Gastrocnemius medialis (tissue), 4 donors: ENCODE measurements at regions of chr13 and their contacts with region 1.

Region 1: GRCh38 chr13:48580185-48580803 is 47.4 kb upstream of the RCBTB2 start:
- DNase-seq: peak; percentile 32 to 58
- ATAC-seq: peak; percentile 43 to 48
- H3K4me3 ChIP-seq: no peak overlapping the region
- H3K27ac ChIP-seq: no peak overlapping the region
- H3K4me1 ChIP-seq: peaks cover 5 to 23% of the 10 kb centered on the region in 2 donors
- H3K27me3 ChIP-seq: no peaks in the 10 kb centered on the region
- CTCF ChIP-seq: peak; percentile 58 to 85 (median 76)
- POLR2A ChIP-seq: no peak

Region 2: GRCh38 chr13:48126944-48127830 is 453.1 kb before region 1 on chr13:
- in situ Hi-C with region 1: loop called in 3 of 4 experiments (anchors 10 to 25 kb)
- intact Hi-C with region 1: loop called (anchors 5 kb)
- DNase-seq: peak; percentile 43 to 72
- ATAC-seq: peak; percentile 73 to 79
- H3K4me3 ChIP-seq: no peak overlapping the region
- H3K27ac ChIP-seq: peak overlapping the region; percentile 27 to 80 (median 73)
- H3K4me1 ChIP-seq: peaks cover 12 to 33% of the 10 kb centered on the region in 2 donors
- H3K27me3 ChIP-seq: no peaks in the 10 kb centered on the region
- CTCF ChIP-seq: peak; percentile 53 to 74 (median 72)
- POLR2A ChIP-seq: no peak

Region 3: DNA sequence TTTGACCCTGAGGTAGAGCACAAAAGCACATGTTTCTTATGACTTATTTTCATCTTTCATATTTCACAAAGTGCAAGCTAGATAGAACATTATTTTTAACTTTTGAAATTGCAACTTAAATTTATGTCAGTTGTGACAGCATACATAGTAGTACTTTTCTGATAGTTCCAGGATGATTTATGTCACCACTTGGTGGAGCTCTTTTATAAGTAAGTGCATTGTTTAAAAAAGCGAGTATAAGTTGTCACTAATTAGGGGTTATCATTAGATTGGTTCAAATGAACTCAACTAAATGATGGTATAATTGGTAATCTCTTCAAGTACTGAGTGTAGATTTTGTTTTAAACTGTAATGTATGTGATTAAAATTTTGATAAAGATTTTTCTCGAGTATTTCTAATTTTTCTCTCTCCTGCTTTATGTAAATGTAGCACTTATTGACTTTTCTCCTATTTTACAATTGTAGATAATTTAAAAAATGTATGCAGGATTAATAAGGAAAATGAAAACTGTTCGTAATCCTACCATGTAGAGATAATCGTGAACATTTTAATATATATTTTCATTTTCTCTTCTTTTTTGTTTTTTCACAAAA is 245.7 kb before region 1 on chr13:
- in situ Hi-C with region 1: loop called in 3 of 4 experiments (anchors 5 to 25 kb)
- intact Hi-C with region 1: loop called (anchors 1 kb)
- DNase-seq: no peak
- ATAC-seq: peak in 1 of 2 donors; percentile 51
- H3K4me3 ChIP-seq: no peak overlapping the region
- H3K27ac ChIP-seq: no peak overlapping the region
- H3K4me1 ChIP-seq: peaks cover 4% of the 10 kb centered on the region in 2 donors
- H3K27me3 ChIP-seq: no peaks in the 10 kb centered on the region
- CTCF ChIP-seq: peak in 4 of 5 experiments; percentile 21 to 64 (median 61)
- POLR2A ChIP-seq: no peak

Region 4: DNA sequence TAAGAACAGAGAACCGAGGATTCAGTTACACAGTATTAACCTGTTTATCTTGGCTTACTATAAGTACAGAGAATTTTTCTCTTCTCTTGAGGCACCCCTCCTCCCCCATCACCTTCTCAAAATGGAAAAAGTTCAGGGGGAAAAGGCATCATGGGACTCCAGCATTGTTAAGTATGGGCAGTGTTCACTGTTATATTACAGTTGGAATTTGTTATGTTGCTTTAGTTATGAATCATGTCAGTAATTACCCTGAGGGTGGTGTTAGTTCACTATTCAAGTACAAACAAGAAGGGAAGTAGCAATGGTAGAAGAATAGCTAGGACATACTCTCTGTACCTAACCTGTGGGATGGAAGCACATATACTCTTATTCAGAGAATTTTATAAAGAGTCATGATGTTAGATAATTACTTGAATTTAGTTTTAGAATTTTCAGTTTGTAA is 179.4 kb before region 1 on chr13:
- in situ Hi-C with region 1: loop called in 1 of 4 experiments (anchors 25 kb)
- intact Hi-C with region 1: loop called (anchors 5 kb)
- DNase-seq: no peak
- ATAC-seq: peak; percentile 71 to 79
- H3K4me3 ChIP-seq: no peak overlapping the region
- H3K27ac ChIP-seq: peak overlapping the region; percentile 44 to 71 (median 70)
- H3K4me1 ChIP-seq: peaks cover 0 to 14% of the 10 kb centered on the region in 2 donors
- H3K27me3 ChIP-seq: no peaks in the 10 kb centered on the region
- CTCF ChIP-seq: no peak
- POLR2A ChIP-seq: no peak

Region 5: DNA sequence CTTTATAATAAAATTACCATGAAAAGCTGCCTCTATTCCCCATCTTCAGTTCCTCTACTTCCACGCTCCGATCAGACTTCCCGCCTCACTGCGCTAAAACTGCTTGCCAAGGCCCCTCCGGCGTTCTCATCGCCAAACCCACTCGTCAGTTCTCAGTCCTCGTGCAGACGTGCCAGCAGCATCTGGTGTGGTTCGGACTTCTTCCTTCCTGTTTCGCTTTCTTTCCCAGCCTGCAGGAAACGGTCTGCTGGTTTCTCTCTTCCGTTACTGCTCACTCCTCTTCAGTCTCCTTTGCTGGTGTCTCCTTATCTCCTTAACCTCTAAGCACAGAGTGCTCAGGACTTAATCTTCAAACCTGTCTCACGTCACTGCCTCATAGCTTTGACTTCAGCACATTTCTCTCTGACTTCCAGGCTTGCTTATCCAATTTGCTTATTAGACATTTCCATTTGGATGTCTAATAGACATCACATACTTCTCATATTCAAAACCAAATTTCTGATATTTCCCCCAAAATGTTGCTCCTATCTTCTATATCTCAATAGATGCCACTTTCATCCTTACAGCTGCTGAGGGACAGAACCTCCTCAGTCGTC is 87.7 kb before region 1 on chr13:
- in situ Hi-C with region 1: loop called in 1 of 4 experiments (anchors 10 kb)
- intact Hi-C with region 1: loop called (anchors 5 kb)
- DNase-seq: peak; percentile 52 to 67
- ATAC-seq: peak; percentile 71 to 74
- H3K4me3 ChIP-seq: peak overlapping the region; percentile 26 to 47 (median 37)
- H3K27ac ChIP-seq: peak overlapping the region; percentile 57 to 73 (median 67)
- H3K4me1 ChIP-seq: peaks cover 9 to 17% of the 10 kb centered on the region in 2 donors
- H3K27me3 ChIP-seq: no peaks in the 10 kb centered on the region
- CTCF ChIP-seq: no peak
- POLR2A ChIP-seq: no peak

Region 6: DNA sequence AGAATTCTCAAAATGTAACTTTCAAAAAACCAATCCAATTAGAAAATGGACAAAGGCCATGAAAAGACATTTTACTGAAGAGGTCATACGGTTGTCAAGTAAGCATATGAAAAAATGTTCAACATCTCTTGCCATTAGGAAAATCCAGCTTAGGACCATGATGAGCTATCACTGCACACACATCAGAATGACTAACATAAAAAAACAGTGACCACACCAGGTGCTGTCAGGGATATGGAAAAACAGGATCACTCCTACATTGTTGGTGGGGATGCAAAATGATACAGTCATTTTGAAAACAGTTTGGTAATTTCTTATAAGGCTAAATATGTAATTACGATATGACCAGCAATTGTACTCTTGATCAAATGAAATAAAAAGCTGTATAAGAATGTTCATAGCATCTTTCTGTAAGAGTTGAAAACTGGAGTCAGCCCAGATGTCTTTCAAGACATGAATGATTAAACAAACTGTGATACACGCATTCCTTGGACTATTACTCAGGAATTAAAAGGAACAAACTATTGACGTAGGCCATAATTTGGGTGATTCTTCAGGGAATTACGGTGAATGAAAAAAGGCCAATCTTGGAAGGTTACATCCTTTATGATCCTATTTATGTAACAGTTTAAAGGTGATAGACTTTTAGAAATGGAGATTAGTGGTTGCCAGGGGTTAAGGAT is 20.5 kb before region 1 on chr13:
- in situ Hi-C with region 1: no loop called
- intact Hi-C with region 1: no loop called
- DNase-seq: no peak
- ATAC-seq: no peak
- H3K4me3 ChIP-seq: no peak overlapping the region
- H3K27ac ChIP-seq: no peak overlapping the region
- H3K4me1 ChIP-seq: no peaks in the 10 kb centered on the region
- H3K27me3 ChIP-seq: no peaks in the 10 kb centered on the region
- CTCF ChIP-seq: no peak
- POLR2A ChIP-seq: no peak

Region 7: GRCh38 chr13:48647630-48648029 is 67.3 kb after region 1 on chr13:
- in situ Hi-C with region 1: loop called in 1 of 4 experiments (anchors 10 kb)
- intact Hi-C with region 1: no loop called
- DNase-seq: no peak
- ATAC-seq: no peak
- H3K4me3 ChIP-seq: no peak overlapping the region
- H3K27ac ChIP-seq: no peak overlapping the region
- H3K4me1 ChIP-seq: no peaks in the 10 kb centered on the region
- H3K27me3 ChIP-seq: no peaks in the 10 kb centered on the region
- CTCF ChIP-seq: peak in 1 of 5 experiments; percentile 8
- POLR2A ChIP-seq: no peak

Region 8: GRCh38 chr13:48775804-48776203 is 195.5 kb after region 1 on chr13:
- in situ Hi-C with region 1: no loop called
- intact Hi-C with region 1: loop called (anchors 10 kb)
- DNase-seq: no peak
- ATAC-seq: no peak
- H3K4me3 ChIP-seq: no peak overlapping the region
- H3K27ac ChIP-seq: no peak overlapping the region
- H3K4me1 ChIP-seq: no peaks in the 10 kb centered on the region
- H3K27me3 ChIP-seq: no peaks in the 10 kb centered on the region
- CTCF ChIP-seq: no peak
- POLR2A ChIP-seq: no peak